Left colon (tissue), 2 donors: ENCODE measurements at regions of chr20 and their contacts with region 1.

Region 1: GRCh38 chr20:63641792-63642544 is 11.3 kb downstream of the STMN3 start:
- DNase-seq: peak; percentile 89 to 98
- ATAC-seq: peak; percentile 85

Region 2: DNA sequence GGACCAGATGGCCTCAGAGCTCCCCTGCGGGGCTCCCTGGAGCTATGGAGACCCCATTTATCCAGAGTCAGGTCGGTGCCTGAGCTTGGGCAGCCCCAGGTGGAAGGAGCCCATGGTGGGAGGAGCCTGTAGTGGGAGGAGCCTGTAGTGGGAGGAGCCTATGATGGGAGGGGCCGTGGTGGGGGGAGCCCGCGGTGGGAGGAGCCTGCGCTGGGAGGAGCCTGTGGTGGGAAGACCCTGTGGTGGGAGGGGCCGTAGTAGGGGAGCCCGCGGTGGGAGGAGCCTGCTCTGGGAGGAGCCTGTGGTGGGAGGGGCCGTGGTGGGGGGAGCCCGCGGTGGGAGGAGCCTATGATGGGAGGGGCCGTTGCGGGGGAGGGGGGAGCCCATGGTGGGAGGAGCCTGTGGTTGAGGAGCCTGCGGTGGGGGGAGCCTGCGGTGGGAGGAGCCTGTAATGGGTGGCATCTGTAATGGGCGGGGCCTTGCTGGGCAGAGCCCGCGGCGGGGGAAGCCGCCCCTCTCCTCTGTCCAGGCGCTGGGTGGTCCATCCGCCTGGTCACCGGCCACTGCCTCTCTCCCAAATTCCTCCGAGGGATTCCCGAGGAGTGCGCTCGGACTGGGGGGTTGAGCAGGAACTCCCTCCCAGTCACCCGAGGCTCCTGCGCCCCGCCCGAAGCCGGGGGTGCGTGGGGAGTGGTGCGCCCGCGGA is 88.6 kb before region 1 on chr20:
- intact Hi-C with region 1: loop called in 1 of 2 experiments (anchors 10 kb)
- DNase-seq: peak; percentile 85 to 89
- ATAC-seq: peak; percentile 80

Region 3: DNA sequence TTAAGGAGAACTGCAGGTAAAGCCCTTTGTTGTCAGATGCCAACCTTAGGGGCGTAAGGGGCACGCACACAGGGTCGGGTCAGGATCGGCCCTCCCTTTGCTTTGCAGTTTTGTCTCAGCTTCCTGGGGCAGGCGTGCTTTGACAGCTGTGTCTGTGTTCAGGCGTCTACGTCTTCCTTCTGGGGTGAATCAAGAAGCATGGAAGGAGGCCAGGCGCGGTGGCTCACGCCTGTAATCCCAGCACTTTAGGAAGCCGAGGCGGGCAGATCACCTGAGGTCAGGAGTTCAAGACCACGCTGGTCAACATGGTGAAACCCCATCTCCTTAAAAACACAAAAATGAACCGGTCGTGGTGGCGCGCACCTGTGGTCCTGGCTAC is 67.2 kb after region 1 on chr20:
- intact Hi-C with region 1: no loop called
- DNase-seq: no peak
- ATAC-seq: no peak

Region 4: DNA sequence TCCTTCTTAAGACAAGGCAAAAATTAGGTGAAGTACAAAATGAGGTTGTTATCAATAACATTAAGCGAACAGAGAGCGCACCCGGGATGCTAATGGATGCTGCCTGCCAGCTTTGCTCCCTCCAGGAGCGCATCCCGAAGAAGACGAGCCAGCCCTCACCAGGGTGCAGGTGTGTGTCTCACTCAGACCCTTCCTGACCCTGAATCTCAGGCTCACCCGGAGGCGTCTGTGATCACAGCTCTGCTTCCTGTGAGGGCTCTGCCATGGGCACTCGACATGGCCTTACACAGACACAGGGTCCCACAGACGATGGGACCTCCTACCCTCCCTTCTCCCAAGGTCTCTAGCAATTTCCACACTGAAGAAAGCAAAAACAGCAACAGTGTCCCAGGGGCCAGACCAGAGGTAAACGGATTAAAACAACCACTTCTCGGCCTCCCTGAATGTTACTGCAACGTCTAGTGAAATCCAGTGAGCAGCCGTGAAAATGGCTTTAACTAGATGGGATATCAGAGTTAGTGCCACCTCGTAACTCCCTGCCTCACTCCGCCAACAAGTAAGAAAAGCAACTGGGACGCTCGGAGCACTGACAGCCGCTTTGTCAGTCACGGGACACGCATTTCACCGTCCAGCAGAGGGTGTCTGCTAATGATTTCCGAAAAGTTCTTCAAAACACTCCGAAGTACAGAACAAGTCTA is 177.4 kb after region 1 on chr20:
- intact Hi-C with region 1: no loop called
- DNase-seq: peak in 1 of 2 donors; percentile 47
- ATAC-seq: peak; percentile 73

Region 5: GRCh38 chr20:64057628-64058498 is 415.9 kb after region 1 on chr20:
- intact Hi-C with region 1: no loop called
- DNase-seq: peak in 1 of 2 donors; percentile 87
- ATAC-seq: peak; percentile 76